GM10248 (cell line): ENCODE measurements at regions of chr2 and their contacts with region 1.

Region 1: GRCh38 chr2:156553714-156554442 is 117.7 kb downstream of the GPD2 start:
- DNase-seq: no peak
- CTCF ChIP-seq: no peak

Region 2: DNA sequence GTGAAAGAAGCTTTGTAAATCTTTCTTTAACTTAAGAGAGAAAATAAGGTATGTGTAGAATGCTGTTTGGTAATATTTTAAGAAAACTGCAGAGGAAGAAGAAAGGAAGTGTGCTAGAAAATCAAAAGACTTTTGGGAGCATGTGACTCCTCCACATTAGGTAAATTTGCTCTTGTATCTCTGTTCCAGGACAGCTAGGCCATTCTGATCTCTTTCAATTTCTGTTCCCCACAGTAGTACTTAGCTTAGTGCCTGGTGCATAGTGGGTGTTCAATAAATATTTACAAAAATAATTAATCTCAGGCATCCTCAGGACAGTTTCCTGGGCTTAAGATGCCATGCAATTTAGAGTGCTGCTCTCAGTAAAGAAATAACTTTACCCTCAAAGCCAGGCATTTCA is 12.6 kb before region 1 on chr2:
- CTCF ChIA-PET with region 1: interaction called, 10 read pairs
- POLR2A ChIA-PET with region 1: no interaction called
- DNase-seq: no peak
- CTCF ChIP-seq: no peak